KBM-7 (cell line): ENCODE measurements at regions of chr17 and their contacts with region 1.

Region 1: DNA sequence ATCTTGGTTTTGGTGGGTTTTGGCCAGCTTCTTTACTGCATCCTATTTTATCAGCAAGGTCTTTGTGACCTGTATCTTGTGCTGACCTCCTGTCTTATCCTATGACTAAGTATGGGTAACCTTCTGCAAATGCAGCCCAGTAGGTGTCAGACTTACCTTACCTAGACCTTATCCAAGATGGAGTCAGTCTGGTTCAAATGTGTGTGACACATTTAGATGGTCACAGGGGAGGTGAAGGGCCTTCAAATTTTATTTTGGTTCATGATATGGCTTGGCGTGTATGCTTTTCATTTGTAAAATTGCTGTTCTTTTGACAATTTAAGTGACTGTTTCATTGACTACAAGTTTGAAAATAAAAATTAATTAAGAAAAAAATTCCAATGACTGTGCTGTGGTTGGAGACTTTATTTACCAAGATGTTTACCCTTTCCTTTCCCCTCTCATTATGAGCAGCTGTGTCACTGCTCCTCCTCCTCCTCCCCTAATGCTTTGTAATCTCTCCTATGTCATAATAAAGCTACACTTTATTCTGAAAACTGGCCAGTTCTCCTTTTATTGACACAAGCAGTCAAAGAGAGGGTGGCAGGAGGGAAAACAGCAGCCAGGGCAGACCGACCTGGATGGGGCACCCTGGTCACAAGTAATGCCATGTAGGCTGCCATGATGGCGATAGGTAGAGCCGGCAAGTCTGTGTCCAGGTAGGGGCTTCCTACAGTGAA is 49.4 kb downstream of the TNFRSF13B start:
- DNase-seq: no peak

Region 2: DNA sequence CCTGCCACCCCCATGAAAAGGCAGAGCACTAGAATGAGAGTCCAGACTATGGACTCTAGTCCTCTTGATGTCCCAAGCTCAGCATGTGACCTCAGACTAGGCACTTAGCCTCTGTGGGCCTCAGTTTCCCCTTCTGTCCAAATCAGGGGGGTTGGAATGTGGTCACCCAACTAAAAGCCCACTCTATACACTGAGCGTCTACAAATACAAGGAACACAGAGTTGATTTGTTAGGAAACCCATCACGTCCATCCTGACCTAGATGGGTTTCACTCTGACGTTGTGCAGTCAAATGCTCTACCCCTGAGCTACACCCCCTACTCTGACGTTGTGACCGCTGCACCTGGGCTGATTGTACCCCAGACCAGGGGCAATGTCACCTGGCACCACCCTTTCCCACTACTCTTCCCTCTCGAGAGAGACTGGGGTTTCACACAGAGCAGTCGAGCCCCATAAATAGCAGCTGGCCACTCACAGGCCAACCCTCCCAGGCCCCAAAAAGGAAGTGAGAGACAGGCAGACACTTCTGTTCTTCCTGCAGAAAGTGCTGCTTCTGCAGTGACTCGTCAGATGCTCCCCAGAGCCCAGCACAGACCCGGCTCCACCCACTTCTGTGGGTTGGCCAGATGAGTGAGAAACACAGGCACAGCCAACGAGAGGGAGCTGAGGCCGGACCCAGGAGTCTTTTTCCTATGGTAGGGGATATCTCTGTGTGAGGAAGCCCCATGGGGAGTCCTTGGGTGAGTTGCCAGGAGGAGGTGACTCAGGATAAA is 65.5 kb after region 1 on chr17:
- in situ Hi-C with region 1: loop called (anchors 5 kb)
- DNase-seq: peak; percentile 80